Mammary epithelial cell (primary cell): ENCODE measurements at regions of chr1 and their contacts with region 1.

Region 1: GRCh38 chr1:180343931-180344769 is 114.1 kb downstream of the LHX4 start:
- DNase-seq: peak; percentile 47
- H3K4me3 ChIP-seq: no peak overlapping the region
- H3K27ac ChIP-seq: no peak overlapping the region
- H3K4me1 ChIP-seq: peaks cover 5% of the 10 kb centered on the region
- H3K27me3 ChIP-seq: no peaks in the 10 kb centered on the region
- CTCF ChIP-seq: no peak

Region 2: DNA sequence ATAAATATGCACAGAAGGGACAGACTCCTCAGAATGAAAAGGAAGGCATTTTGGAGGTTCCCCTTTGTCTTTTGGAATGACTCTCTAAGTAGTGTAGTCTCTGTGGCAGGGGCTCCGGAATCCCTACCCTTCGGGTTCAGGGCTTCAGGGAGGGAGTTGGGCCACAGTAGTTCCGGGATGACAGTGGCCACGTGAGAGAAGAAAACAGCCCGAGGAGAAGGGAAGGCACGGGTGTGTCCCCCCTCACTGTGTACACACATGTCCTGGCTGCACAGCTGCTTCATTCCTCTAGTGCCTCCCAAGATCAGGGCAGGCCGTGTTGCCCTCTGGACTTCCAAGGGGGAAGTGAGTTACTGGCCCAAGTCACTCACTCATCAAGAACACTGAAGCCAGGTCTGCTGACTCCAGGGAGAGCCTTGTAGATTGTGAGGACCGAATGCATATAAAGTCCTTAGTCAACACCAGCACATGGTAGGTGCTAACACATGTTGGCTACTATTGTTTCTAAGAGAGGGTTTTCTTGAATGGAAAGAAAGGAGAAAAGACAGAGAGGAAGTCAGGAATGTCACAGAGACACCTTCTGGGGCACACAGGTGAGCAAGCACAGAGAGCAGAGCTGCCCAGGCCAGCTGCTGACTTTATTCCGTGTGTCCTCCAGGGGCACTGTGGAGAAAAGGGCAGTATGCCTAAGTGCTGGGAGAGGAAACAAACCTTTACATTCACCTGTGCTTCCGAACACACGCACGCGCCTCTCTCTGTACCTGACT is 74.2 kb before region 1 on chr1:
- CTCF ChIA-PET with region 1: no interaction called
- dilution Hi-C with region 1: no loop called
- in situ Hi-C with region 1: no loop called
- intact Hi-C with region 1: no loop called
- DNase-seq: no peak
- H3K4me3 ChIP-seq: no peak overlapping the region
- H3K27ac ChIP-seq: no peak overlapping the region
- H3K4me1 ChIP-seq: peaks cover 5% of the 10 kb centered on the region
- H3K27me3 ChIP-seq: no peaks in the 10 kb centered on the region
- CTCF ChIP-seq: peak; percentile 61 to 62

Region 3: DNA sequence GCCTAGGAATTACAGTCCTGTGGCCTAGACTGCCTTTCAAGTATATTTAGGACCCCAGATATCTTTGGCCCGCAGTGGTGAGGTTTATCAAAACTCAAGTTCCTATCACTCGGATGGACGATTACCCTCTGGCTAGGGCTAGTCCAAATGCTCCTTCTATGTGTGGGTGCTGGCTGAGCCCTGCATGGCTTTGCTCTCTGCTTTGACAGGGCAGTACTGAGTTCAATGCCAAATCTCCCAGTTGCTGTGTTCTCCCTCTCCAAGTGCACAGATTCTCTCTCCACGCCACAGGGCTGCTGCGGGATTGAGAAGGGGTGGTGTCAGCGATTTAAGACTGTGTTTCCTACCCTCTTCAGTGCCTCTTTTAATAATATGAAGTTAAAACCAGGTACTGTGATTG is 17.1 kb before region 1 on chr1:
- CTCF ChIA-PET with region 1: no interaction called
- dilution Hi-C with region 1: no loop called
- in situ Hi-C with region 1: no loop called
- intact Hi-C with region 1: loop called (anchors 2 kb)
- DNase-seq: no peak
- H3K4me3 ChIP-seq: no peak overlapping the region
- H3K27ac ChIP-seq: no peak overlapping the region
- H3K4me1 ChIP-seq: no peaks in the 10 kb centered on the region
- H3K27me3 ChIP-seq: no peaks in the 10 kb centered on the region
- CTCF ChIP-seq: no peak